Activated naive CD4-positive, alpha-beta T cell treated with anti-CD3 and anti-CD28 coated beads for 36 hours (primary cell): ENCODE measurements at regions of chr9 and their contacts with region 1.

Region 1: GRCh38 chr9:36873247-36873875 is 160.7 kb downstream of the PAX5 start:
- DNase-seq: peak; percentile 84
- H3K4me3 Mint-ChIP-seq: no peak overlapping the region
- H3K27ac Mint-ChIP-seq: no peak overlapping the region
- H3K4me1 Mint-ChIP-seq: no peaks in the 10 kb centered on the region
- H3K27me3 Mint-ChIP-seq: no peaks in the 10 kb centered on the region

Region 2: DNA sequence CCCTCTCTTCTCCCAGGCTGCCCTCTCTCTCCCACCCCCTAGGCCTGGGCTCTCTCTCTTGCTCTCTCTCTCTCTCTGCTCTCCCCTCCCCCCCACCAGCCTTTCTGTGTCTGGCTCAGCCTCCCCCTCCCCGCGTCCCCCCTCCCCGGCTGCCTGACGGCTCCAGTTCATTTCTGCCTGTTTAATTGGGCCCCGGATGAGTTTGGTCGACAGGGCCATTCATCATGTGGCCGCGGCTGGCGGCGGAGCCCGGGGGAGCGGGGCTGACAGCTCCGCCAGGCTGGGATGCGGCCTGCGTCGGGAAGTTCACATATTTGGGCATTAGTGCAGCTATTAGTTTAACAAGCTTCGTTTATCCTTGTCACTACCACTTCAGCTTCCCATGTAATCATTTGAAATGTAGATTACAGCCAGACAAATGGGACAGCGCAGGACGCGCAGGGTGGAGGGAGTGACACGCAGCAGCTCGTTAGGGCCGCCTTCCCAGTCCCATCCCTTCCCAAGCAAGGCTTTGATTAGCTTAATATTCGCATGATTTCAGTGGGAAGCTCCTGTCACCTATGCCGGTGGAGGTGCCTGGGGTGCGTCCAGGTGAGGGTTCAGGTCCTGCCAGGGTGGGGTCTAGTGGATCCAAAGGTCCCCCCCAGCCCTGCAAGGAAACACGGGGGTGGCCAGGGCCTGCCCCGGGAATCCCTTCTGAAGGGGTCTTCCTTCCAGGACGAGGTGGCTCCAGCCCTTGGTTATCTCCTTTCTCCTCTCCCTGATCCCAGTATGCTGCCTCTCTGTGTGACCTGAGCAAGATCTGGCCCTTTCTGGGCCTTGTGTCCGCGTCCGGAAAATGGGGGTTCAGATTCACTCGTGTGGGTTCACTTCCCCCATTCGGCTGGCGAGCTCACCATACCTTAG is 54.1 kb before region 1 on chr9:
- CTCF ChIA-PET with region 1: no interaction called
- intact Hi-C with region 1: no loop called
- DNase-seq: no peak
- H3K4me3 Mint-ChIP-seq: no peak overlapping the region
- H3K27ac Mint-ChIP-seq: no peak overlapping the region
- H3K4me1 Mint-ChIP-seq: peaks cover 4% of the 10 kb centered on the region
- H3K27me3 Mint-ChIP-seq: peaks cover 19% of the 10 kb centered on the region

Region 3: DNA sequence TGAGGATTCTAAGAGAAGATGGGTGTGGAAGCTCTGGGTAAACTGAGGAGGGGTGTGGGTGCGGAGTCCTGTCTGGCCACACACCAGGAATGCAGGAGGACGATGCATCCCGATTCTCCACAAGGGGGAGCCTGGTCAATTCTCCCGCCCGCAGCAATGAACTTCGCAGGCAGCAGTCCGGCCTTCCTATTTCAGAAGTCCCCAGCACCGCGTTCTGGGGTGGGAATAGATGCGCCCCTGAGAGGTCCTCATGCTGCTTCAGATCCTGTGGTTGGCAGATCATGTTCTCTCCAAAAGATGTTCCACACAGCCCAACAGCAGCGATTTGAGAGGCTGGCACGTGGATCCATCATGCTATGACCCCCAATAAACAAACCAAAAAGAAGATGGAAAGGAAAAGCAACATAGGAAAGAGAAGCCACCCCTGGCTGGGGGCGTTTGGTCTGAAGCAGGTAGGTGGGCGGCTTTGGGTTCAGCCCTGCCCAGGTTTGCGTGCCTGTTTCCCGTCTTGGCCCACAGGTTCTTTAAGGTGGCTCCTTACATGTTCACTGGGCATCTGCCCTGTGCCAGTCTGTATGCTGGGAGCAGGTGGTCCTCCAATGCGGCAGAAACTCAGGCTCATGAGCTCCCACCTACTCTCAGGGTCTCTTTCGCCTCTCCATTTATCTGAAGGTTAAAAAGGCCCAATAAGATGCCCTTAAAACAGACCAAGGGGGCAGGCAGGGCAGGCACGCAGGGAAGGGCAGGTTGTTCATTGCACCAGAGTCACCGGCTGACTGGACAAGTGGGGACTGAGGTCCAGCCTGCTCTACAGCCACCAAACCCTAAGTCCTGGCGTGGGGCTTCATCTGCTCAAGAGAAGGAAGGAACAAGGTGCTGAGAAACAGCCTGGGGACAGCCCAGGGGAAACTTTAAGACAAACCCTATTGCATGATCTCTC is 10.9 kb before region 1 on chr9:
- CTCF ChIA-PET with region 1: interaction called, 16 read pairs
- intact Hi-C with region 1: no loop called
- DNase-seq: peak; percentile 27
- H3K4me3 Mint-ChIP-seq: no peak overlapping the region
- H3K27ac Mint-ChIP-seq: no peak overlapping the region
- H3K4me1 Mint-ChIP-seq: no peaks in the 10 kb centered on the region
- H3K27me3 Mint-ChIP-seq: no peaks in the 10 kb centered on the region

Region 4: GRCh38 chr9:36903541-36904435 is 30.4 kb after region 1 on chr9:
- CTCF ChIA-PET with region 1: interaction called, 11 read pairs
- intact Hi-C with region 1: no loop called
- DNase-seq: peak; percentile 61
- H3K4me3 Mint-ChIP-seq: no peak overlapping the region
- H3K27ac Mint-ChIP-seq: no peak overlapping the region
- H3K4me1 Mint-ChIP-seq: peaks cover 4% of the 10 kb centered on the region
- H3K27me3 Mint-ChIP-seq: peaks cover 26% of the 10 kb centered on the region

Region 5: GRCh38 chr9:36956908-36957307 is 83.5 kb after region 1 on chr9:
- CTCF ChIA-PET with region 1: interaction called, 10 read pairs
- intact Hi-C with region 1: no loop called
- DNase-seq: no peak
- H3K4me3 Mint-ChIP-seq: no peak overlapping the region
- H3K27ac Mint-ChIP-seq: no peak overlapping the region
- H3K4me1 Mint-ChIP-seq: peaks cover 4% of the 10 kb centered on the region
- H3K27me3 Mint-ChIP-seq: peaks cover 50% of the 10 kb centered on the region

Region 6: DNA sequence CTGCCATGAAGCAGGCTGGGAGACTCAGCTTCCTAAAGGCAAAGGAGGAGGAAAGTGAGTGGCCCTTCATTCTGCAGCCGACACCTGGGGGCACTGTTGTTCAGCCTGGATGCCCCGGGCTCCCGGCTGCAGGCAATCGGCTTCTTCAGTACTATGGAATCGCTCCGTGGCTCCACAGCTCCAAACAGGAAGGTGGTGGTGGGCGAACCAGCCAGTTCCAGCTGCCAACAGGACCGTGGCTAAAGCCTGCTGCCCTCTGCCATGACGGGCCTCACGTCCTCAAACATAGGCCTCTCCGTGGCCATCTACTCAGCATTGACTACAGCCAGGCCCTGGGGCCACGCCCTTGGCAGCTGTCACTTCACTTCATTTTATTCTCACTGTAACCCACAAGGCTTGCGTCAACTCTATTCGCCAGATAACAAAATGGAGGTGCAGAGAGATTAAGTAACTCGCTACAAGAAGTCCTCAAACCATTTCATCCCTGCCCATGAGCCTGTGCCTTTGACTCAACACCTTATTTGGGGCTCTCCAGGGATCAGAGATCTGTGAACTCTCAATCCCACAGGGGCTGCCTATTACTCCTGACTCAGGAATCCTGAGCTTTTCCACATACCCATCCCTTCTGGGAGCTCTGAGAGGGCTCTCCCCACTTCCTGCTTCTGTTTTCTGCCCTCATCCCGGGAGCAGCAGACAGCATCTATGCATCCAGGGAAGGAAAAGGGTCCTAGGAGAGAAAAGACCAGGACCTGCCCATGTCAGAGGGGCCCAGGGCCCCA is 122.8 kb after region 1 on chr9:
- CTCF ChIA-PET with region 1: interaction called, 112 read pairs
- intact Hi-C with region 1: loop called (anchors 1 kb)
- DNase-seq: peak; percentile 77
- H3K4me3 Mint-ChIP-seq: no peak overlapping the region
- H3K27ac Mint-ChIP-seq: no peak overlapping the region
- H3K4me1 Mint-ChIP-seq: peaks cover 3% of the 10 kb centered on the region
- H3K27me3 Mint-ChIP-seq: peaks cover 30% of the 10 kb centered on the region

Region 7: GRCh38 chr9:37390759-37391158 is 517.4 kb after region 1 on chr9:
- CTCF ChIA-PET with region 1: interaction called, 5 read pairs
- intact Hi-C with region 1: loop called (anchors 1 kb)
- DNase-seq: peak; percentile 67
- H3K4me3 Mint-ChIP-seq: no peak overlapping the region
- H3K27ac Mint-ChIP-seq: no peak overlapping the region
- H3K4me1 Mint-ChIP-seq: no peaks in the 10 kb centered on the region
- H3K27me3 Mint-ChIP-seq: no peaks in the 10 kb centered on the region